ENCODE measurements at regions of chr4 and their contacts with region 1.

Region 1: GRCh38 chr4:107243141-107243781 is 207.1 kb upstream of the DKK2 start:
- DNase-seq: peak; percentile 94
- H3K4me3 ChIP-seq: no peak overlapping the region
- H3K27ac ChIP-seq: peak overlapping the region in 3 of 4 donors; percentile 68 to 74 (median 69)
- H3K4me1 ChIP-seq: peaks cover 0 to 44% (median 35%) of the 10 kb centered on the region in 4 donors
- H3K27me3 ChIP-seq: no peaks in the 10 kb centered on the region
- CTCF ChIP-seq: no peak
- EP300 ChIP-seq: peak in 3 of 4 donors; percentile 17 to 78 (median 58)
- POLR2A ChIP-seq: no peak

Region 2: DNA sequence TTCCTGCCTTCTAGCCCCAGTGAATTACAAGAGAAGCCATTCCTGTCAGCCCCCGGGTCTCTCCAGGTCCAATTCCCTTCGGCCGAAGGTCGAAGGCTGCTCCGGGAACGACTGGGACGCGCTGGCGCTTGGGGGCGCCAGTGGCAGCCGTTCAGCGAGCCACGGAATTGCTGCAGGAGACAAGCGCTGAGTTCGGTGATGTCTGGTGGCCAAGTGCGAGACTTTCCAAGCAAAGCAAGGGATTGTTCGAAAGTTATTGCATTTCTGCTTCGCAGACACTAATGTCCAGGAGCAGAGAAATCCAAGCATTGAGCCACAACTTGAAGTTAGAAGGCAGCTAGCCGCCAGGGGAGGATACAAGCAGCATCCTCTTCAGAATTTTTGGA is 206.1 kb before region 1 on chr4:
- intact Hi-C with region 1: loop called (anchors 5 kb)
- DNase-seq: peak; percentile 73
- H3K4me3 ChIP-seq: peak overlapping the region in 3 of 4 donors; percentile 43 to 50 (median 49)
- H3K27ac ChIP-seq: no peak overlapping the region
- H3K4me1 ChIP-seq: peaks cover 0 to 41% (median 38%) of the 10 kb centered on the region in 4 donors
- H3K27me3 ChIP-seq: peaks cover 0 to 61% (median 4%) of the 10 kb centered on the region in 3 donors
- CTCF ChIP-seq: peak in 2 of 4 experiments; percentile 18 to 57
- EP300 ChIP-seq: no peak
- POLR2A ChIP-seq: no peak

Region 3: DNA sequence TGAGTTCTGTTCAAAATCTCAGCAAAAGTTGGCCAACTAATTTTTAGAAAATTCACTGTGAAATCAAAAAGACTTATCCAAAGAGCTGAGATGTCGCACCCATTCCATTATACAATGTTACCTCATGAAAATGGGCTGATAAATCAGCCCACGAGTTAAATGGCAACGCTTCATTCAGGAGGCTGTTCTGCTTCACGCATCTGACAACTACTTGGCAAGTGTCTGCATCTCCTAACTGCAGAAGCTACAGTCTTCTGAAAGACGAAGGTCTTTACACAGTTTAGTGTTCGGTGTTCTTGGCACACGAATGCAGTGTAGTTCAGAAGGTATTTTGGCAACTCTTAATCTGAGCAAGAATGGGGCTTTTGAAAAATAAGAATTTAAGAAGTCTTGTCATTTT is 40.5 kb before region 1 on chr4:
- intact Hi-C with region 1: loop called (anchors 5 kb)
- DNase-seq: no peak
- H3K4me3 ChIP-seq: no peak overlapping the region
- H3K27ac ChIP-seq: peak overlapping the region in 3 of 4 donors; percentile 54 to 61 (median 59)
- H3K4me1 ChIP-seq: peaks cover 0 to 13% (median 10%) of the 10 kb centered on the region in 4 donors
- H3K27me3 ChIP-seq: no peaks in the 10 kb centered on the region
- CTCF ChIP-seq: no peak
- EP300 ChIP-seq: peak in 1 of 4 donors; percentile 29
- POLR2A ChIP-seq: no peak

Region 4: DNA sequence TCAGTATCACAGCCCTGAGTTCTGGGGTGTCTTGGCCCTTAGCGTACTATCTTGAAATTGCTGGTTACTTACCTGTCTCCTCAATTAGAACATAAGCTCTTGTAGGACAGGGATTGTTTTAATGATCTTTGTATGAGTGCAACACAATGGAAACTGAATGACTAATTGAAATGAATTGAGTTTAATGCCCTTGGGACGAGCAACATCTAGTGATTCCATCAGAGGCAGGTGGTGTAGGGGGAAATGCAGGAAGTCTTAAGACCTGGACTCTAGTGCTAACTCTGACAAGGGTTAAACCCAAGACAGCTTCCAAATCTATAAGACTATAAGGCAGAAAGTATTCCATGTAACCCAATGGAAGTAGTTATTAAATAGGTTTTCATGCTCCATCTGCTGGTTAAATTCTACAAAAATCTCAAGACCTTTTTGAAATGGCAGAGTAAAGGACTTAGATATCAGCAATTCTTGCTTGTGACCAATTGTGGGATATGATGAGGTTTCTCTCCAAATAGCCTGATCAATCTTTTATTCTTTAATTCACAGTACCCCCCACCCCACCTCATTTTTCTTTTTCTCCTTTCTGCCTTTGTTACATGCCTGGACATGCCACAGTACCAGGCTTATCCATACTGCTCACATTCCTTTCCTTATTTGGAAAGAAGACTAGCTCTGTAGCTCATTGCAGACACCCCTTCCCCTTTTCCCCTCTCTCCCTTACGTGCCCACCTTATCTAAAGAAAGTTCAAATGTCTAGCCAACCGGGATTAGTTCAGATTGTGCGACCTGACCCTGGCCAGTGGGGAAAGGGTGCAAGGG is 136.0 kb after region 1 on chr4:
- intact Hi-C with region 1: loop called (anchors 5 kb)
- DNase-seq: no peak
- H3K4me3 ChIP-seq: no peak overlapping the region
- H3K27ac ChIP-seq: no peak overlapping the region
- H3K4me1 ChIP-seq: peaks cover 0 to 9% (median 2%) of the 10 kb centered on the region in 4 donors
- H3K27me3 ChIP-seq: no peaks in the 10 kb centered on the region
- CTCF ChIP-seq: peak in 1 of 4 experiments; percentile 12
- EP300 ChIP-seq: no peak
- POLR2A ChIP-seq: no peak

Region 5: GRCh38 chr4:107666134-107666533 is 422.9 kb after region 1 on chr4:
- intact Hi-C with region 1: loop called (anchors 5 kb)
- DNase-seq: no peak
- H3K4me3 ChIP-seq: peak overlapping the region in 2 of 4 donors; percentile 9 to 20
- H3K27ac ChIP-seq: peak overlapping the region in 3 of 4 donors; percentile 53 to 60 (median 54)
- H3K4me1 ChIP-seq: peaks cover 0 to 46% (median 24%) of the 10 kb centered on the region in 4 donors
- H3K27me3 ChIP-seq: no peaks in the 10 kb centered on the region
- CTCF ChIP-seq: peak; percentile 22 to 45 (median 40)
- EP300 ChIP-seq: no peak
- POLR2A ChIP-seq: no peak

Region 6: GRCh38 chr4:107736924-107737448 is 493.7 kb after region 1 on chr4:
- intact Hi-C with region 1: loop called (anchors 10 kb)
- DNase-seq: no peak
- H3K4me3 ChIP-seq: no peak overlapping the region
- H3K27ac ChIP-seq: no peak overlapping the region
- H3K4me1 ChIP-seq: peaks cover 0 to 48% (median 28%) of the 10 kb centered on the region in 4 donors
- H3K27me3 ChIP-seq: no peaks in the 10 kb centered on the region
- CTCF ChIP-seq: peak; percentile 17 to 71 (median 57)
- EP300 ChIP-seq: no peak
- POLR2A ChIP-seq: no peak

Region 7: DNA sequence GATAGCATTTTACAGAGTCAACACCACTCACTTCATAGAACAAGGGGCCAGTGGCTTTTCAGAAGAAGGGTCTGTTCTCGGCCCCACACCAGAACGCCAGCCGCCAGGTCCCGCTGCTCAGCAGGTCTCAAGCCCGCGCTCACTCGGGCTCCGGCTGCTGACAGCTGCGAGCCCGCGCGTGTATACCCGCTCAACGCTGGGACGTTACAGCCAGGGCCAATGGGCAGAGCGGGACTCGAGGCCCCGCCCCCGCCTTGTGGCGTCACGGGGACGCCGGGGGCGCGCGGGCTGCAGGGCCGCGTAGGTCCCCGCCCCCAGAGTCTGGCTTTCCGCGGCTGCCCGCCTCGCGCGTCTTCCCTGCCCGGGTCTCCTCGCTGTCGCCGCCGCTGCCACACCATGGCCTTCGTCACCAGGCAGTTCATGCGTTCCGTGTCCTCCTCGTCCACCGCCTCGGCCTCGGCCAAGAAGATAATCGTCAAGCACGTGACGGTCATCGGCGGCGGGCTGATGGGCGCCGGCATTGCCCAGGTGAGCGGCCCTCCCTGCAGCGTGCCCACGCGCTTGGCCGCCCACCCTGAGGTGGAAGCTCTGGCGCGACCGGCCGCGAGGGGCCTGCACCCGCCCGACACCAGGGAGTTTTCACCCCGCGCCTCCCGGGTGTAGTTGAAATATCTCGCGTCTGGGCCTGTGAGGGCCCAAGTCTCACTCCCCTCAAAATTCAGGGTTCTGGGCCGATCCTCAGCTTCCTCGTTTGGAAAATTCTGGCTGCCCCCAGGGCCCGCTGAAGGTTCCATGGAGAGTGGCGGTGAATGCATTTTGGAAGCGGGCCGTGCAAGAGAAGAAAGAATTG is 746.5 kb after region 1 on chr4 and contains the start of gene HADH:
- intact Hi-C with region 1: loop called (anchors 10 kb)
- DNase-seq: peak; percentile 97
- H3K4me3 ChIP-seq: peak within 1 kb of the TSS; percentile 63 to 92 (median 86)
- H3K27ac ChIP-seq: peak within 1 kb of the TSS; percentile 82 to 96 (median 93)
- H3K4me1 ChIP-seq: peaks cover 0 to 63% (median 57%) of the 10 kb centered on the region in 4 donors
- H3K27me3 ChIP-seq: no peaks in the 10 kb centered on the region
- CTCF ChIP-seq: no peak
- EP300 ChIP-seq: peak in 1 of 4 donors; percentile 26
- POLR2A ChIP-seq: peak; percentile 85 to 91
- total RNA-seq, gene HADH: 46.6 to 119 (median 65.0) TPM